PC-9 (cell line): ENCODE measurements at regions of chr17 and their contacts with region 1.

Region 1: DNA sequence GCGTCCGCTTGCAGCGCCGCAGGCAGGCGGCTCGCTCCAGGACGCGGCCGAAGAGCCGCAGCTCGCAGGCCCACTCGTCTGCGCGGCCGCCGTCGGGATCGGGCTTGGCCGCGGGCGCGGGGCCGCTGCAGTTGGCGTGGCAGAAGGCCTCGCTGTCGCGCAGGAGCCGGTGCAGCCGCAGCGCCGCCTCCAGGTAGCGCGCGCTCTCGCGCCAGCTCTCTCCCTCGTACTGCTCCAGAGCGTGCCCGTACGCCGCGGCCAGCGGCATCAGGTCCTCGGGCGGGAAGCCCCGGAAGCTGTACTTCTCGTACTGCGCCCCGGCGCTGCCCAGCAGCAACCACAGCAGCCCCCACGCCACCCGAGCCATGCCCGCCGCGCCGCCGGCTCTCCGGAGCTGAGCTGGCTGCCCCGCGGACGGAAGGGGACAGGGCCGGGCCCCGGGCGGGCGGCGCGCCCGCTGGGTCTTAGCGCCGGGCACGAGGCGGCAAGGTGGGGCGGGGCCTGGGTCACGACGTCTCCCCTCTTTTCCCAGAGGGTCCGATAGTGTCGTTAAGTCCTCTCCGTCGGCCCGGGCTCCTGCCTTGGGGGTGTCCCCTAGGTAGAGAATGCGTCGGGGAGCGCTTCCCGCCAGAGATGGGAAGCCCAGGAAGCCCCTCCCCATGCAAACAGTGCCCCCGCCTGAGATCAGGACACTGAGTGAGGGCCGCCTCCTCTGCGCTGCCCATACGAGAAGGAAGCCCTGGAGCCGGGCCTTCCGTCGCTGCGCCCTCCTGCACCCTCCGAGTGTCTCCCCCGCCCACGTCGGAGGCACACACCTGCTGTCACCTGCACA is at the start of gene P3H4:
- DNase-seq: peak; percentile 40 to 82
- H3K4me3 ChIP-seq: peak within 1 kb of the TSS; percentile 94
- H3K27ac ChIP-seq: 0 out of 2 replicates have a peak within 1 kb of the TSS, but pooled peaks have one; percentile 22
- H3K4me1 ChIP-seq: peaks cover 27% of the 10 kb centered on the region
- H3K27me3 ChIP-seq: no peaks in the 10 kb centered on the region
- CTCF ChIP-seq: peak; percentile 53; the same call in 1 of the 2 replicates
- total RNA-seq, gene P3H4: 26.8 and 34.0 TPM in 2 replicates

Region 2: GRCh38 chr17:41772218-41772585 is 39.6 kb before region 1 on chr17:
- CTCF ChIA-PET with region 1: no interaction called
- POLR2A ChIA-PET with region 1: no interaction called
- intact Hi-C with region 1: loop called (anchors 1 kb)
- DNase-seq: peak; percentile 87 to 88
- H3K4me3 ChIP-seq: peak overlapping the region; percentile 23; the same call in 1 of the 2 replicates
- H3K27ac ChIP-seq: peak overlapping the region; percentile 93
- H3K4me1 ChIP-seq: peaks cover 49% of the 10 kb centered on the region
- H3K27me3 ChIP-seq: no peaks in the 10 kb centered on the region
- CTCF ChIP-seq: no peak

Region 3: DNA sequence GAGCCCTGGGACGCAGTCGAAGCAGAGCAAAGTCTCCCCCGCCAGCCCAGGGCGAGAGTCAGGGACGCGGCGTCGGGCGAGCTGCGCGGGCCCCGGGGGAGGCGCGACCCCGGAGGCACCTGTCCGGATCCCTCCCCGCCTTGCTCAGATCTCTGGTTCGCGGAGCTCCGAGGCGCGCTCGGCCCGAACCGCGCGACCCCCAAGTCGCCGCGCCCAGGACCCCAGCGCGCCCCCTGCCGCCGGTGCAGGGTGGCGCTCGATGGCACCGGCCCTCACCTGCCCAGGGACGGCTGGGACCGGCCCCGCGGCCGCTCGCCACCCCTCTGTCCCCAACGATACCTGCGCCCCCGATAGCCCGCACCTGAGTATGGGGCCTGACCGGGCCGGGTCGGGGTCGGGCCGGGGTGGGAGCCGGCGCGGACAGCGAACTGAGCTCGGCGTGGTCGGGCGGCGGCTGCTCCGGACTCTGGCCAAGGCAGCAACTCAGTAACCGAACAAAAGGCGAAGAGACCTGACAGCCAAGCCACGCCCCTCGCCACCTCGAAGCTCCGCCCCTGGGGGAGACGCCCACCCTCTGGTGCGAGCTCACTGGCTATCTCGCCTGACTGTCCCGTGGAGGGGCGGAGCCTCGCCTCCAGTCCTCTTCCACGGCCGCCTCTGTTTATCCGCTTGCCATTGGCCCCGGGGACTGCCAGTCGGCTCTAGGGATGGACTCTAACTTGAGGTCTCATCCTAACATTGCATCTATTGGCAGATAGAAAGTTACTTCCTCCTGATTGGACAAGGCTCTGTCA is 25.3 kb before region 1 on chr17 and contains the start of gene JUP:
- CTCF ChIA-PET with region 1: no interaction called
- POLR2A ChIA-PET with region 1: interaction called, 19 read pairs
- intact Hi-C with region 1: no loop called
- DNase-seq: peak; percentile 100
- H3K4me3 ChIP-seq: peak within 1 kb of the TSS; percentile 63
- H3K27ac ChIP-seq: peak within 1 kb of the TSS; percentile 98
- H3K4me1 ChIP-seq: peaks cover 39% of the 10 kb centered on the region
- H3K27me3 ChIP-seq: no peaks in the 10 kb centered on the region
- CTCF ChIP-seq: peak; percentile 77
- total RNA-seq, gene JUP: 259 TPM in 2 replicates